ENCODE measurements at regions of chr2 and their contacts with region 1.

Region 1: GRCh38 chr2:61179701-61180639 is 18.0 kb downstream of the C2orf74 start:
- DNase-seq: peak; percentile 30
- H3K4me3 ChIP-seq: peak overlapping the region in 1 of 3 experiments; percentile 5
- H3K27ac ChIP-seq: peak overlapping the region; percentile 31
- H3K4me1 ChIP-seq: peaks cover 41% of the 10 kb centered on the region
- H3K27me3 ChIP-seq: no peaks in the 10 kb centered on the region
- CTCF ChIP-seq: no peak

Region 2: GRCh38 chr2:59833941-59834340 is 1346.0 kb before region 1 on chr2:
- CTCF ChIA-PET with region 1: no interaction called
- dilution Hi-C with region 1: no loop called
- in situ Hi-C with region 1: no loop called
- intact Hi-C with region 1: no loop called
- DNase-seq: no peak
- H3K4me3 ChIP-seq: no peak overlapping the region
- H3K27ac ChIP-seq: no peak overlapping the region
- H3K4me1 ChIP-seq: no peaks in the 10 kb centered on the region
- H3K27me3 ChIP-seq: no peaks in the 10 kb centered on the region
- CTCF ChIP-seq: no peak

Region 3: GRCh38 chr2:60764736-60765534 is 415.0 kb before region 1 on chr2:
- CTCF ChIA-PET with region 1: no interaction called
- dilution Hi-C with region 1: loop called (anchors 5 kb)
- in situ Hi-C with region 1: no loop called
- intact Hi-C with region 1: no loop called
- DNase-seq: peak; percentile 14
- H3K4me3 ChIP-seq: no peak overlapping the region
- H3K27ac ChIP-seq: no peak overlapping the region
- H3K4me1 ChIP-seq: no peaks in the 10 kb centered on the region
- H3K27me3 ChIP-seq: no peaks in the 10 kb centered on the region
- CTCF ChIP-seq: no peak

Region 4: GRCh38 chr2:61229936-61230335 is 50.0 kb after region 1 on chr2:
- CTCF ChIA-PET with region 1: no interaction called
- dilution Hi-C with region 1: loop called (anchors 5 kb)
- in situ Hi-C with region 1: no loop called
- intact Hi-C with region 1: no loop called
- DNase-seq: no peak
- H3K4me3 ChIP-seq: no peak overlapping the region
- H3K27ac ChIP-seq: no peak overlapping the region
- H3K4me1 ChIP-seq: no peaks in the 10 kb centered on the region
- H3K27me3 ChIP-seq: no peaks in the 10 kb centered on the region
- CTCF ChIP-seq: no peak

Region 5: GRCh38 chr2:61272421-61273070 is 92.6 kb after region 1 on chr2:
- CTCF ChIA-PET with region 1: no interaction called
- dilution Hi-C with region 1: loop called (anchors 5 kb)
- in situ Hi-C with region 1: no loop called
- intact Hi-C with region 1: no loop called
- DNase-seq: no peak
- H3K4me3 ChIP-seq: no peak overlapping the region
- H3K27ac ChIP-seq: no peak overlapping the region
- H3K4me1 ChIP-seq: no peaks in the 10 kb centered on the region
- H3K27me3 ChIP-seq: no peaks in the 10 kb centered on the region
- CTCF ChIP-seq: no peak

Measured in mammary epithelial cell (primary cell).